Prostate gland (tissue), 2 donors: ENCODE measurements at regions of chr5 and their contacts with region 1.

Region 1: GRCh38 chr5:68272289-68272688 is 56.7 kb downstream of the PIK3R1 start:
- DNase-seq: no peak
- H3K4me3 ChIP-seq: no peak overlapping the region
- H3K27ac ChIP-seq: no peak overlapping the region
- H3K4me1 ChIP-seq: no peaks in the 10 kb centered on the region
- H3K27me3 ChIP-seq: no peaks in the 10 kb centered on the region
- CTCF ChIP-seq: peak in 2 of 4 experiments; percentile 37 to 42
- POLR2A ChIP-seq: no peak

Region 2: DNA sequence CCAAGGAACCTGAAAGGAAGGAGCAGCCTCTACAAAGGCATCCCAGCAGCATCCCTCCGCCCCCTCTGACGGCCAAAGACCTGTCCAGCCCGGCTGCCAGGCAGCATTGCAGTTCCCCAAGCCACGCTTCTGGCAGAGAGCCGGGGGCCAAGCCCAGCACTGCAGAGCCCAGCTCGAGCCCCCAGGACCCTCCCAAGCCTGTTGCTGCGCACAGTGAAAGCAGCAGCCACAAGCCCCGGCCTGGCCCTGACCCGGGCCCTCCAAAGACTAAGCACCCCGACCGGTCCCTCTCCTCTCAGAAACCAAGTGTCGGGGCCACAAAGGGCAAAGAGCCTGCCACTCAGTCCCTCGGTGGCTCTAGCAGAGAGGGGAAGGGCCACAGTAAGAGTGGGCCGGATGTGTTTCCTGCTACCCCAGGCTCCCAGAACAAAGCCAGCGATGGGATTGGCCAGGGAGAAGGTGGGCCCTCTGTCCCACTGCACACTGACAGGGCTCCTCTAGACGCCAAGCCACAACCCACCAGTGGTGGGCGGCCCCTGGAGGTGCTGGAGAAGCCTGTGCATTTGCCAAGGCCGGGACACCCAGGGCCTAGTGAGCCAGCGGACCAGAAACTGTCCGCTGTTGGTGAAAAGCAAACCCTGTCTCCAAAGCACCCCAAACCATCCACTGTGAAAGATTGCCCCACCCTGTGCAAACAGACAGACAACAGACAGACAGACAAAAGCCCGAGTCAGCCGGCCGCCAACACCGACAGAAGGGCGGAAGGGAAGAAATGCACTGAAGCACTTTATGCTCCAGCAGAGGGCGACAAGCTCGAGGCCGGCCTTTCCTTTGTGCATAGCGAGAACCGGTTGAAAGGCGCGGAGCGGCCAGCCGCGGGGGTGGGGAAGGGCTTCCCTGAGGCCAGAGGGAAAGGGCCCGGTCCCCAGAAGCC is 1106.5 kb before region 1 on chr5:
- intact Hi-C with region 1: loop called (anchors 10 kb)
- DNase-seq: peak; percentile 78
- H3K4me3 ChIP-seq: peak overlapping the region; percentile 5 to 7
- H3K27ac ChIP-seq: peak overlapping the region; percentile 30 to 72
- H3K4me1 ChIP-seq: peaks cover 3% of the 10 kb centered on the region
- H3K27me3 ChIP-seq: no peaks in the 10 kb centered on the region
- CTCF ChIP-seq: peak; percentile 57 to 87 (median 75)
- POLR2A ChIP-seq: no peak

Region 3: DNA sequence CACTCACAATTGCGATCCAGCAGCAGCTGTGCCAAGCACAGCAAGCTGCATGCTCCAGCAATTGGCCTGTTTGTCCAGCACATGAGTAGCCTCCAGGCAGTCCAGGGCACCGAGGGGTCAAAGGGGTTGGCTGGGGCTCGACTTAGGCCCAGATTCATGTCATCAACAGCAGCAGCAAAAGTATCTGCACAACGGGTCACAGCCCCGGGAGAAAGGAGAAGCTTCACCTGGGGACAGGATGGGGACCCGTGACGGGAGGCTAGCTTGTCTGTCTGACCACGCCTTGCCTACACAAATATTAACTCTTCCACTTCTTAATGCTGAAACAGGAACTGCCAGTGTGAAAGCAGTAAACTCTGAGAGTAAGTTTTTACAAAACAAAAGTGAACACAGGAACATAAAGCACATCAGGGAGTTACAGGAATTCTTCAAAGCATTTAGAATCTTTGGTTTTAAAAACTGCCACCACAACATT is 134.5 kb after region 1 on chr5:
- intact Hi-C with region 1: no loop called
- DNase-seq: peak; percentile 29
- H3K4me3 ChIP-seq: no peak overlapping the region
- H3K27ac ChIP-seq: peak overlapping the region in 1 of 2 donors; percentile 36
- H3K4me1 ChIP-seq: peaks cover 6% of the 10 kb centered on the region
- H3K27me3 ChIP-seq: no peaks in the 10 kb centered on the region
- CTCF ChIP-seq: no peak
- POLR2A ChIP-seq: no peak